ENCODE measurements at regions of chr2 and their contacts with region 1.

Region 1: DNA sequence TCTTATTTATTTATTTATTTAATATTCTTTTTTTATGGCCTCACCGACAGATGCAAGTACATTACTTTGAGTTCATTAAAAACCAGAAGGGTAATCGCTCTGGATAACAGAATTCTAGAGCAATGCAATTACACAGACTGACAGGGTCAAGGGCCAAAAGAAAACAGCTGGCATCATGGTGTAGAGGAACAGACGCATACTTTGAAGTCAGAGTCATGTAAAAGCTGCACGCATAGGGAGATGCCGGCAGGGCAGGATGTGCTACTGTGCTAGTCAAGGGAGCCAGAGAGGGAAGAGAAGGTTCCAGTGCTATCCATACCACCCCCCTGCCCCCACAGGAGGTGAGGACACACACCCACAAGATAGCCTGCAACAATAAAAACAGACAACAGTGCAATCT is 115.2 kb upstream of the TFCP2L1 start:
- DNase-seq: no peak
- ATAC-seq: no peak
- H3K4me3 ChIP-seq: no peak overlapping the region
- H3K27ac ChIP-seq: no peak overlapping the region
- H3K4me1 ChIP-seq: peaks cover 0 to 6% of the 10 kb centered on the region in 2 donors
- H3K27me3 ChIP-seq: no peaks in the 10 kb centered on the region

Region 2: DNA sequence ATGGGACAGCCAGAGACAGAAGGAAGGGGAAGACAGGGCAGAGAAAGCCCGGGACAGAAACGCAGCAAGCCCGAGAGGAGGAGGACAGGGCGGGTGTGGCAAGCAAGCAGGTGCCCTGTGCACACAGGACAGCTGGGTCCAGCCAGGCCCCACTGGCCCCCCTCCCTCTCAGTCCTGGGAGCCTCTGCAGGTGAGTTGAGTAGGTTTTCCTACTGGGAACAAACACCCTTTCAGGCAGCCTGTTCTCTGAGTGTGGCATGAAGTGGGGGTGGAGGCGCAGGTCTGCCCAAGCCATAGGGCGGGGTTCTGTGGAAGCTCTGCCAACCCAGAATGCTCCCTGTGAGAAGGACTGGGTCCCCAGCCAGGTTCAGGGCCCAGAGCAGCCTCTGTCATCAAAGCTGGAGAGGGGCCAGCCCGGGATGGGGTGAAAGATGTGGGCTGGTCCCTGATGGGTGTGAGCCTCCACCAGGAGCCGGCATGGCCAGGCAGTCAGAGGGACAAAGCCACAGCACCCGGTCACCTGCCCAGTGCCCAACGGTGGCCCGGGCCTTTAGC is 244.6 kb before region 1 on chr2:
- intact Hi-C with region 1: no loop called
- DNase-seq: no peak
- ATAC-seq: no peak
- H3K4me3 ChIP-seq: no peak overlapping the region
- H3K27ac ChIP-seq: no peak overlapping the region
- H3K4me1 ChIP-seq: no peaks in the 10 kb centered on the region
- H3K27me3 ChIP-seq: no peaks in the 10 kb centered on the region

Region 3: GRCh38 chr2:121372721-121373353 is 27.4 kb before region 1 on chr2:
- intact Hi-C with region 1: no loop called
- DNase-seq: no peak
- ATAC-seq: no peak
- H3K4me3 ChIP-seq: no peak overlapping the region
- H3K27ac ChIP-seq: no peak overlapping the region
- H3K4me1 ChIP-seq: no peaks in the 10 kb centered on the region
- H3K27me3 ChIP-seq: no peaks in the 10 kb centered on the region

Region 4: DNA sequence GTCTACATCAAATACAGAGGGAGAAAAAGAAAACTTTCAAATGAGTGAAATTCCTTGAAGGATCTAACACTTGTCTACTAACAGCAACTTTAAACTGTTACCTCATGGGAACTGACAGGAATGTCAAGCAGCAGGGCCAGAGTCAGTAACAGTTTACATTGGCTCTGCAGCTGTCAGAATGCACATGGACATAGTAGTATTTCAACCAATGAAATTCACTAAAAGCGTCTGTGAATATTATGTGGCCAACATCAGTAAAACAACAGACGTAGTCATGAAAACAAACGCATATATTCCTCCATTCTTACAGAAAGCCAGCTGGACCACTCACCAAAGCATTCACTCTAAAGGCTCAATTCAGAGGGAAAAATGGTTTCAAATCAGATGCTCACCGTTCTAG is 51.2 kb after region 1 on chr2:
- intact Hi-C with region 1: no loop called
- DNase-seq: no peak
- ATAC-seq: no peak
- H3K4me3 ChIP-seq: no peak overlapping the region
- H3K27ac ChIP-seq: no peak overlapping the region
- H3K4me1 ChIP-seq: no peaks in the 10 kb centered on the region
- H3K27me3 ChIP-seq: no peaks in the 10 kb centered on the region

Region 5: GRCh38 chr2:121707920-121708361 is 307.7 kb after region 1 on chr2:
- intact Hi-C with region 1: loop called in 1 of 2 experiments (anchors 2 kb)
- DNase-seq: no peak
- ATAC-seq: no peak
- H3K4me3 ChIP-seq: no peak overlapping the region
- H3K27ac ChIP-seq: no peak overlapping the region
- H3K4me1 ChIP-seq: peaks cover 0 to 2% of the 10 kb centered on the region in 2 donors
- H3K27me3 ChIP-seq: no peaks in the 10 kb centered on the region

Region 6: DNA sequence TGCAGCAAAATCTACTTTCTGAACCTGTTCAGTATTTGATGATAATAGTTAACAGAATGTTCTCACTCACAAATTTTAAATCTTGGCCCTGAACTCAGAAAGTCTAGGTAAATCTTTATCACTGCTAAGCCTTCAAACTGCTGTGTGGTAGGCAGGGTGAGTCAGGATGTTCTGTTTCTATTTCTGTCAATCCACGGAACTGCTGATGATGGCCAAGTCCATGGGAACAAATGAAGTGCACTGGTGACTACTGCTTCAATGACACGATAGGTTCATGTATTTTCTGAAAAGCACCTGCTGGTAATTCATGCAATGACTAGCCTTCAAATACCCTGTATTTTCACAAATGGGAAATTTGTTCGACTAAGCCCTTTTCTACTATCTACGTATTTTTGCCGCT is 322.3 kb after region 1 on chr2:
- intact Hi-C with region 1: loop called (anchors 2 kb)
- DNase-seq: no peak
- ATAC-seq: no peak
- H3K4me3 ChIP-seq: no peak overlapping the region
- H3K27ac ChIP-seq: no peak overlapping the region
- H3K4me1 ChIP-seq: peaks cover 0 to 4% of the 10 kb centered on the region in 2 donors
- H3K27me3 ChIP-seq: no peaks in the 10 kb centered on the region

Region 7: DNA sequence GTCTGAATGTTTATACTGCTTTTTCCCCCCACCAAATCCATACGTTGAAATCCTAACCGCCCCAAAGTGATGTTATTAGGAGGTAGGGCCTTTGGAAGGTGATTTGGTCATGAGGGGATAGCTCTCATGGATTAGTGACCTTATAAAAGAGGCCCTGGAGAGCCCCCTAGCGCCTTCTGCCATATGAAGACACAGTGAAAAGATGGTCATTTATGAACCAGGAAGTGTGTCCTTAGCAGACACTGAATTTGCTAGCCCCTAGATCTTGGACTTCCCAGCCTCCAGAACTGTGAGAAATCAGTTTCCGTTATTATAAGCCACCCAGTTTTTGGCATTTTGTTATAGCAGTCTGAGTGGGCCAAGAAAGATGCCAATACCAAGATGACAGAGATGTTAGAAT is 348.0 kb after region 1 on chr2:
- intact Hi-C with region 1: loop called (anchors 10 kb)
- DNase-seq: no peak
- ATAC-seq: no peak
- H3K4me3 ChIP-seq: no peak overlapping the region
- H3K27ac ChIP-seq: no peak overlapping the region
- H3K4me1 ChIP-seq: no peaks in the 10 kb centered on the region
- H3K27me3 ChIP-seq: no peaks in the 10 kb centered on the region

Region 8: GRCh38 chr2:121755236-121756111 is 355.3 kb after region 1 on chr2 and contains the start of gene TSN:
- intact Hi-C with region 1: loop called in 1 of 2 experiments (anchors 10 kb)
- DNase-seq: peak; percentile 99
- ATAC-seq: peak; percentile 100
- H3K4me3 ChIP-seq: peak within 1 kb of the TSS; percentile 83 to 84
- H3K27ac ChIP-seq: peak within 1 kb of the TSS in 1 of 2 donors; percentile 28
- H3K4me1 ChIP-seq: no peaks in the 10 kb centered on the region
- H3K27me3 ChIP-seq: no peaks in the 10 kb centered on the region
- total RNA-seq, gene TSN: 37.5 to 37.7 TPM